ENCODE measurements at regions of chr1 and their contacts with region 1.

Region 1: DNA sequence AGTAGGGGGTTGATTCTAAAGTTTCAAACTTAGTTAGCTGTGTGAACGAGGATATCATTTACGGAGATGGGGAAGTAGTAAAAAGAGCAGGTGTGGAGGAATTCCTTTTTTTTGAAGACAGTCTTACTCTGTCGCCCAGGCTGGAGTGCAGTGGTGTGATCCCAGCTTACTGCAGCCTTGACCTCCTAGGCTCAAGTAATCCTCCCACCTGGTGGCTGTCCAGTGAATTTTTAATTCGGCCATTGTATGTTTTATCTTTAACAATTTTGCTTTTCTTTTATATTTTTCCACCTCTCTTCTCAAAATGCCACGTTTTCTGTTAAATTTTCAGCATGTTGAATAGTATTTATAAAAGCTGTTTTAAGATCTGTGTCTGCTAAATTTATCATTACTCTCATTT is 12.3 kb upstream of the CENPF start:
- DNase-seq: no peak
- H3K4me3 ChIP-seq: no peak overlapping the region
- H3K27ac ChIP-seq: no peak overlapping the region
- H3K4me1 ChIP-seq: no peaks in the 10 kb centered on the region
- H3K27me3 ChIP-seq: no peaks in the 10 kb centered on the region
- CTCF ChIP-seq: peak in 2 of 3 experiments; percentile 6 to 9; a peak in 1 of 4 replicates
- EP300 ChIP-seq: no peak
- POLR2A ChIP-seq: no peak
- RAD21 ChIP-seq: no peak; a peak in 1 of 4 replicates

Region 2: GRCh38 chr1:214573386-214574358 is 17.0 kb before region 1 on chr1:
- CTCF ChIA-PET with region 1: interaction called, 12 read pairs
- POLR2A ChIA-PET with region 1: no interaction called
- DNase-seq: no peak
- H3K4me3 ChIP-seq: no peak overlapping the region
- H3K27ac ChIP-seq: no peak overlapping the region
- H3K4me1 ChIP-seq: no peaks in the 10 kb centered on the region
- H3K27me3 ChIP-seq: peaks cover 0 to 1% (median 0%) of the 10 kb centered on the region in 4 experiments; a peak in 1 of 7 replicates
- CTCF ChIP-seq: no peak
- EP300 ChIP-seq: no peak
- POLR2A ChIP-seq: no peak
- RAD21 ChIP-seq: no peak

Region 3: GRCh38 chr1:214602764-214603657 is 12.3 kb after region 1 on chr1 and contains the start of gene CENPF:
- CTCF ChIA-PET with region 1: no interaction called
- POLR2A ChIA-PET with region 1: interaction called, 12 read pairs
- DNase-seq: peak; percentile 92 to 98
- H3K4me3 ChIP-seq: peak within 1 kb of the TSS; percentile 84 to 95 (median 87)
- H3K27ac ChIP-seq: peak within 1 kb of the TSS; percentile 81
- H3K4me1 ChIP-seq: peaks cover 0 to 2% (median under 1%) of the 10 kb centered on the region in 4 experiments; a peak in 2 of 7 replicates
- H3K27me3 ChIP-seq: no peaks in the 10 kb centered on the region
- CTCF ChIP-seq: peak in 1 of 3 experiments; percentile 2; a peak in 1 of 4 replicates
- EP300 ChIP-seq: no peak
- POLR2A ChIP-seq: peak; percentile 73 to 90
- RAD21 ChIP-seq: no peak
- total RNA-seq, gene CENPF: 170 and 175 TPM in 2 replicates

Measured in H1 (cell line).